ENCODE measurements at regions of chr17 and their contacts with region 1.

Region 1: GRCh38 chr17:31487648-31488263 is 96.3 kb downstream of the RAB11FIP4 start:
- DNase-seq: peak; percentile 96
- ATAC-seq: peak; percentile 90
- H3K4me3 Mint-ChIP-seq: peak overlapping the region; percentile 83
- H3K27ac Mint-ChIP-seq: peak overlapping the region; percentile 89
- H3K4me1 Mint-ChIP-seq: peaks cover 40% of the 10 kb centered on the region
- H3K27me3 Mint-ChIP-seq: no peaks in the 10 kb centered on the region; the same call in 1 of the 2 replicates
- CTCF ChIP-seq: no peak

Region 2: GRCh38 chr17:31369266-31369665 is 118.5 kb before region 1 on chr17:
- CTCF ChIA-PET with region 1: no interaction called
- POLR2A ChIA-PET with region 1: no interaction called
- DNase-seq: no peak
- ATAC-seq: no peak
- H3K4me3 Mint-ChIP-seq: no peak overlapping the region
- H3K27ac Mint-ChIP-seq: 0 out of 2 replicates have a peak overlapping the region, but pooled peaks have one; percentile 51
- H3K4me1 Mint-ChIP-seq: peaks cover 9% of the 10 kb centered on the region
- H3K27me3 Mint-ChIP-seq: no peaks in the 10 kb centered on the region
- CTCF ChIP-seq: no peak

Region 3: GRCh38 chr17:31433091-31433790 is 54.5 kb before region 1 on chr17:
- CTCF ChIA-PET with region 1: interaction called, 21 read pairs
- POLR2A ChIA-PET with region 1: no interaction called
- DNase-seq: no peak
- ATAC-seq: no peak
- H3K4me3 Mint-ChIP-seq: no peak overlapping the region
- H3K27ac Mint-ChIP-seq: no peak overlapping the region
- H3K4me1 Mint-ChIP-seq: peaks cover 13% of the 10 kb centered on the region
- H3K27me3 Mint-ChIP-seq: no peaks in the 10 kb centered on the region; the same call in 1 of the 2 replicates
- CTCF ChIP-seq: no peak

Region 4: GRCh38 chr17:31467502-31468256 is 20.1 kb before region 1 on chr17:
- CTCF ChIA-PET with region 1: interaction called, 19 read pairs
- POLR2A ChIA-PET with region 1: interaction called, 5 read pairs
- DNase-seq: peak; percentile 34
- ATAC-seq: peak; percentile 15
- H3K4me3 Mint-ChIP-seq: no peak overlapping the region
- H3K27ac Mint-ChIP-seq: peak overlapping the region; percentile 90
- H3K4me1 Mint-ChIP-seq: peaks cover 49% of the 10 kb centered on the region
- H3K27me3 Mint-ChIP-seq: no peaks in the 10 kb centered on the region; the same call in 1 of the 2 replicates
- CTCF ChIP-seq: no peak

Region 5: GRCh38 chr17:31499771-31500554 is 12.2 kb after region 1 on chr17:
- CTCF ChIA-PET with region 1: interaction called, 13 read pairs
- POLR2A ChIA-PET with region 1: interaction called, 10 read pairs
- DNase-seq: no peak
- ATAC-seq: peak; percentile 67
- H3K4me3 Mint-ChIP-seq: no peak overlapping the region
- H3K27ac Mint-ChIP-seq: peak overlapping the region; percentile 79
- H3K4me1 Mint-ChIP-seq: peaks cover 62% of the 10 kb centered on the region
- H3K27me3 Mint-ChIP-seq: no peaks in the 10 kb centered on the region
- CTCF ChIP-seq: no peak

Region 6: DNA sequence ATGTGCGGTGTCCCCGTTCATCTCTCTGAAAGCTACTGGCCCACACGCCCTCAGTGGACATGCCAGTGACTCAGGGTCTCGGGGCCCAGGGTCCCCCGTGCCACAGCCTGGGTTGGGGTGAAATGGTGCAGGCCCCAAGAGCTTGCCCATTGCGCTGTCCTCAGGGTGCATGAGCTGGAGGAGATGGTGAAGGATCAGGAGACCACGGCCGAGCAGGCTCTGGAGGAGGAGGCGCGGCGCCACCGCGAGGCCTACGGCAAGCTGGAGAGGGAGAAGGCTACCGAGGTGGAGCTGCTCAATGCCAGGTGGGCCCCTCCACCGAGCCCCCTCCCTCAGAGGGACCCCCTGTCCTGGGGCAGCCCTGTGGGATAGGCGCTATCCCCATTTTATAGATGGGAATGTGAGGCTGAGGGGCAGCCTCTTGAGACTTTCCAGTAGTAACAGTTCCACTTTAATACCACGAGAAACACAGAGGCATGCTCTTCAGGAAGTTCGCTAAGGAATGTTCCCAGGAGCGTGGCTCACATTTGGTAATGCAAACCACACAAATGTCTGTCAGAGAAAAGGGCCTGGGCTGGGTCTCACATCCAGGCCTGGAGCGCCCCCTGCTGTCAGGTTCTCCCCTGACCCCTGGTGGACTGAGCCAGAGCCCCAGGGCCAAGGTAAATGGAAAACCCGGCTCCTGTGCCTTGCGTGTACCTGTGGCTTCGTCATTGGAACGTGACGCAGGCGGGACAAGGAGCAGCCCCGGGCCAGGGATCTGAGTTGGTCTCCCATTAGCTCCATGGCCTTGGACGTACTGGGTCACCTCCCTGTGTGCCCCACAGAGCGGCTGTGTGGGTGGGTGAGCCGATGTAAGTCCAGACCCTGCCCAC is 37.4 kb after region 1 on chr17:
- CTCF ChIA-PET with region 1: interaction called, 13 read pairs
- POLR2A ChIA-PET with region 1: interaction called, 3 read pairs
- DNase-seq: peak; percentile 97
- ATAC-seq: peak; percentile 90
- H3K4me3 Mint-ChIP-seq: no peak overlapping the region
- H3K27ac Mint-ChIP-seq: no peak overlapping the region
- H3K4me1 Mint-ChIP-seq: no peaks in the 10 kb centered on the region
- H3K27me3 Mint-ChIP-seq: no peaks in the 10 kb centered on the region
- CTCF ChIP-seq: peak; percentile 83

Region 7: GRCh38 chr17:31549525-31550388 is 62.0 kb after region 1 on chr17:
- CTCF ChIA-PET with region 1: no interaction called
- POLR2A ChIA-PET with region 1: no interaction called
- DNase-seq: peak; percentile 89
- ATAC-seq: peak; percentile 74
- H3K4me3 Mint-ChIP-seq: peak overlapping the region; percentile 88
- H3K27ac Mint-ChIP-seq: no peak overlapping the region
- H3K4me1 Mint-ChIP-seq: peaks cover 7% of the 10 kb centered on the region
- H3K27me3 Mint-ChIP-seq: peaks cover 12% of the 10 kb centered on the region
- CTCF ChIP-seq: no peak

Measured in WTC11 (cell line).